MCF 10A (cell line): ENCODE measurements at regions of chr1 and their contacts with region 1.

Region 1: DNA sequence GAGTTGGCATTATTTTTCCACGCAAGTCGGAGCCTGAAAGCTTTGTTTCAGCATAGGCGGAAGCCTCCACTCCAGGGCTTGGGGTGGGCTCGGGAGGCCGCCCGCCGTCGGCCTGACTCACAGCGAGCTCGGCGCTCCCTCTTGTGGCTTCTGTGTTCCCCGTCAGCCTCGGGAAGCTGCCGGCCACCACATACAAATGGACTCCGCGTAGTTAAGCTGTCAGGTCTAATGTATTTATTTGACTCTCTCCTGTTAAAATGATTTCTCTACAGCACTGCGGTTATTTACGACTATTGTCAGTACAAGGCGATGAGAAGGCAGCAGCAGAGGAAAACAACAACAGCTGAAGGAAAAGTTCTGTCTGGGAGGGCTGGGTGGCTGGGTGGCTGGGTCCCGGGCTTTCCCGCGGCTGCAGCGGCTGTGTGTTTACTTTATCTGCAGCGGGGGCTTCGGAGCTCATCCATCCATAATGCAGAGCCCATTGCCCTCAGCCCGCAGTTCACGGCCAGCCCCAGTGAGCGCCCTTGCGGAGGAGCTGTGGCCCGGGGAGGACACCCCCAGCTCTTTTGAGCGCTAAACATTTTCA is 375.7 kb upstream of the CAMK1G start:
- DNase-seq: peak; percentile 83
- H3K4me3 Mint-ChIP-seq: peak overlapping the region; percentile 62
- H3K27ac Mint-ChIP-seq: no peak overlapping the region
- H3K4me1 Mint-ChIP-seq: no peaks in the 10 kb centered on the region
- H3K27me3 Mint-ChIP-seq: peaks cover 6% of the 10 kb centered on the region
- CTCF ChIP-seq: peak; percentile 98

Region 2: GRCh38 chr1:208634346-208635140 is 573.3 kb before region 1 on chr1:
- CTCF ChIA-PET with region 1: interaction called, 17 read pairs
- POLR2A ChIA-PET with region 1: no interaction called
- intact Hi-C with region 1: no loop called
- DNase-seq: no peak
- H3K4me3 Mint-ChIP-seq: no peak overlapping the region
- H3K27ac Mint-ChIP-seq: no peak overlapping the region
- H3K4me1 Mint-ChIP-seq: no peaks in the 10 kb centered on the region
- H3K27me3 Mint-ChIP-seq: peaks cover 31% of the 10 kb centered on the region
- CTCF ChIP-seq: no peak

Region 3: GRCh38 chr1:209076688-209077087 is 131.1 kb before region 1 on chr1:
- CTCF ChIA-PET with region 1: interaction called, 8 read pairs
- POLR2A ChIA-PET with region 1: no interaction called
- intact Hi-C with region 1: loop called (anchors 2 kb)
- DNase-seq: peak; percentile 84
- H3K4me3 Mint-ChIP-seq: no peak overlapping the region
- H3K27ac Mint-ChIP-seq: no peak overlapping the region
- H3K4me1 Mint-ChIP-seq: peaks cover 15% of the 10 kb centered on the region
- H3K27me3 Mint-ChIP-seq: no peaks in the 10 kb centered on the region
- CTCF ChIP-seq: peak; percentile 68

Region 4: GRCh38 chr1:209219791-209220524 is 12.2 kb after region 1 on chr1:
- CTCF ChIA-PET with region 1: interaction called, 37 read pairs
- POLR2A ChIA-PET with region 1: no interaction called
- intact Hi-C with region 1: no loop called
- DNase-seq: no peak
- H3K4me3 Mint-ChIP-seq: no peak overlapping the region
- H3K27ac Mint-ChIP-seq: no peak overlapping the region
- H3K4me1 Mint-ChIP-seq: no peaks in the 10 kb centered on the region
- H3K27me3 Mint-ChIP-seq: no peaks in the 10 kb centered on the region
- CTCF ChIP-seq: no peak

Region 5: DNA sequence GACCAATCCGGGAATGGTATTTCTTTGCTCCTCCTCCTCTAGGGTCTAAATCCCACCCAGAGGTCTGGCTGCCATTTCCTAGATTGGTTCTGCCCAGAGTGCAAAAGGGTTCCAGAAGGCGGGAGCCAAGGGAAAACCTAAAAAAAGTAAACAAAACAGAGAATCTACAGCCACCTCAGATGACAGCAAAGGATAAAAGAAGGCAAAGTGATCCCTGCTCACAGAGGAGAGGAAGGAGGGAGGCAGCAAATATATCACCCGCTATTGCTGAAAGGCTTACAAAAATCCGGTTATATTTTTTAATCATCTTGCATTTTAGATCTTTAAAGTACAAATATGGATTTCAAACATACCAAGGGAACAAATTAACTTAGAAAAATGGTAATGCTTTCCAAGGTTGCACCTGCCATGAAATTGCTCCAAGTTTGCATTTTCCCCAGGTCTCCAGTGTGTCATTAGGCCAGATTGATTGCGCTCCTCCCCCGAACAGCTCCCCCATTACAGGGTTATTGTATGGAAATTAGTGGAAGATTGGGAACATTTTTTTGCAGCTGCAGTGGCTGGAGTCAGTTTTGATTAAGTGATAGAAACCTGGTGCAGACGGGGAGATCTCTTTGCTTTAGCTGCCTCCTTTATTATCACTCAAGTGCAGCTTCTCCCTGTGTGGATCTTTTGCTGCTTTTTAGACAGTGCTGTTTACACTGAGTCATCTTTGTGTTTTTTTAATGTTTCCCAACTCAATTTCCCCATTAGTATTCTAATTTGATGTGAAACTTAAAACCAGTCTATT is 95.2 kb after region 1 on chr1:
- CTCF ChIA-PET with region 1: interaction called, 10 read pairs
- POLR2A ChIA-PET with region 1: no interaction called
- intact Hi-C with region 1: no loop called
- DNase-seq: peak; percentile 14
- H3K4me3 Mint-ChIP-seq: no peak overlapping the region
- H3K27ac Mint-ChIP-seq: no peak overlapping the region
- H3K4me1 Mint-ChIP-seq: no peaks in the 10 kb centered on the region
- H3K27me3 Mint-ChIP-seq: peaks cover 50% of the 10 kb centered on the region
- CTCF ChIP-seq: no peak

Region 6: GRCh38 chr1:209443971-209444651 is 236.3 kb after region 1 on chr1:
- CTCF ChIA-PET with region 1: interaction called, 18 read pairs
- POLR2A ChIA-PET with region 1: no interaction called
- intact Hi-C with region 1: no loop called
- DNase-seq: peak; percentile 54
- H3K4me3 Mint-ChIP-seq: no peak overlapping the region
- H3K27ac Mint-ChIP-seq: peak overlapping the region; percentile 17
- H3K4me1 Mint-ChIP-seq: peaks cover 24% of the 10 kb centered on the region
- H3K27me3 Mint-ChIP-seq: no peaks in the 10 kb centered on the region
- CTCF ChIP-seq: no peak

Region 7: DNA sequence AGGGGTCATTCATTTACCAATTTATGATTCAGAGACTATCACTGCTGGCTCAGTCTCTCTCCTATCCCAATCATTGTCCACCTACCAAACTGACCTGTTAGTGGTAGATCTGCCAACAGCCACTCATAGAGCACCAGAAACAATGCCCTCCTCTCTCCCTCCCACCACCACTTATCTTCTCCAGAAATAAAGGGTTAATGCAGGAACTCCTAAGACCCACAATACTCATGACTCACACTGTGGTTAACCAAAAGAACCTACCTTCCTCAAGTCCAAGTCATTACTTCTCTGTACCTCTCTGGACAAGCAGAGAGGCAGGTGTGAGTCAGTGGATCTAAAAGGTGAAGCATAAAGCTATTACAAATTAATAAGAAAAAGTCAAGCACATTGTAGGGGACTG is 334.8 kb after region 1 on chr1:
- CTCF ChIA-PET with region 1: interaction called, 11 read pairs
- POLR2A ChIA-PET with region 1: no interaction called
- intact Hi-C with region 1: no loop called
- DNase-seq: peak; percentile 89
- H3K4me3 Mint-ChIP-seq: no peak overlapping the region
- H3K27ac Mint-ChIP-seq: peak overlapping the region; percentile 68
- H3K4me1 Mint-ChIP-seq: peaks cover 52% of the 10 kb centered on the region
- H3K27me3 Mint-ChIP-seq: no peaks in the 10 kb centered on the region
- CTCF ChIP-seq: no peak

Region 8: DNA sequence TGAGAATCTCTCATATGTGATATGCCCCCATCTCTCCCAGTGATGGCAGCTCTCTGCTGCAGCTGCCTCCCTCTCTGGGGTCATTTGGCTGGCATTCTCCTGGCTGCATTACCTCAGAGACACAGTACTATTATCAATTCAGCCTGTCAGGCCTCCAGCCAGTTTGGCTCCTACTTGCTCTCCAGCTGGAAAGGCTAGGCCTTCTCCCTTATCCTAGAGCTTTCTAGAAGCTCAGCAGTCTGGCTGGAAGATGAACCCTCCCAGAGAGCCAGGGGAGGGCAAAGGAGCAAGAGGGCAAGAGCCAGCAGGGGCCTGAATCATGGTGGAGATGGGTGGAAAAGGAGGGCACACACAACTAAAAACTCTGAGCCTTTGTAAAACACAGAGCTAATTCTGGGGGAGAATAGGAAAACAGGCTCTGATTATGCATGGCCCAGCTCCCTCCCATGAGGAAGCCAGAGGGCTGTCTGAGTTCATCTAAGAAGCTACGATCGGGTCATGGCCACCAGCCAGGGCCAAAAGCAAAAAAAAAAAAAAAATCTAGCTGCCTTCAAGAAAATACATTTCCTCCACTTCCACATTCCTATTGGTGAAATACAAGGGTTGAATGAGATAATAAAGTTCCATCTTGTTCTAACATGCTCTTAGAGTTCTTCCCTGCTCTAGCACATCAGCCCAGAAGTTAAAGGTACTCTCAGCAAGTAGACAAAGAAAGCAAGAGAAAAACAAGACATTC is 435.7 kb after region 1 on chr1:
- CTCF ChIA-PET with region 1: no interaction called
- POLR2A ChIA-PET with region 1: no interaction called
- intact Hi-C with region 1: no loop called
- DNase-seq: peak; percentile 61
- H3K4me3 Mint-ChIP-seq: peak overlapping the region; percentile 24
- H3K27ac Mint-ChIP-seq: peak overlapping the region; percentile 68
- H3K4me1 Mint-ChIP-seq: peaks cover 69% of the 10 kb centered on the region
- H3K27me3 Mint-ChIP-seq: no peaks in the 10 kb centered on the region
- CTCF ChIP-seq: no peak

Region 9: GRCh38 chr1:210053126-210053525 is 845.3 kb after region 1 on chr1:
- CTCF ChIA-PET with region 1: no interaction called
- POLR2A ChIA-PET with region 1: no interaction called
- intact Hi-C with region 1: no loop called
- DNase-seq: no peak
- H3K4me3 Mint-ChIP-seq: no peak overlapping the region
- H3K27ac Mint-ChIP-seq: no peak overlapping the region
- H3K4me1 Mint-ChIP-seq: no peaks in the 10 kb centered on the region
- H3K27me3 Mint-ChIP-seq: peaks cover 63% of the 10 kb centered on the region
- CTCF ChIP-seq: no peak

Region 10: DNA sequence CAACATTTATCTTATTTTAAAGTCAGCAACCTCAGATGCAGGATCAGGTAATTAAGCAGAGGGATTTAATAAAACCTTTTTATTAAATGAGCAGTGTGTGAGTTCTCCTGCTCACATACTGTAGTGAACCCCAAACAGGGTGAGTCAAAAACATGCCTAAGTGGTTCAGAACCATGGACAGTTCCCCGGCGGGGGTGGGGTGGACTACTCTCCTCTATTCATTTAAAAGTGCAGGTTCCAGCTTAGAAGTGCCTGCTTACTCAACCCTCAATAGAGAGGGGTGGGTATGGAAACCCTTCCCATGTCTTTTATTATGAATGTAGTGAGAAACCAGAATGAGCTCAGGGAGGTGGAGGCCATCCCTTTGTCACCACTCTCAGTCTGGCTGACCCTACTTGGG is 1518.8 kb after region 1 on chr1:
- CTCF ChIA-PET with region 1: no interaction called
- POLR2A ChIA-PET with region 1: no interaction called
- intact Hi-C with region 1: no loop called
- DNase-seq: peak; percentile 88
- H3K4me3 Mint-ChIP-seq: no peak overlapping the region
- H3K27ac Mint-ChIP-seq: no peak overlapping the region
- H3K4me1 Mint-ChIP-seq: no peaks in the 10 kb centered on the region
- H3K27me3 Mint-ChIP-seq: peaks cover 15% of the 10 kb centered on the region
- CTCF ChIP-seq: no peak